ENCODE measurements at regions of chr17 and their contacts with region 1.

Region 1: DNA sequence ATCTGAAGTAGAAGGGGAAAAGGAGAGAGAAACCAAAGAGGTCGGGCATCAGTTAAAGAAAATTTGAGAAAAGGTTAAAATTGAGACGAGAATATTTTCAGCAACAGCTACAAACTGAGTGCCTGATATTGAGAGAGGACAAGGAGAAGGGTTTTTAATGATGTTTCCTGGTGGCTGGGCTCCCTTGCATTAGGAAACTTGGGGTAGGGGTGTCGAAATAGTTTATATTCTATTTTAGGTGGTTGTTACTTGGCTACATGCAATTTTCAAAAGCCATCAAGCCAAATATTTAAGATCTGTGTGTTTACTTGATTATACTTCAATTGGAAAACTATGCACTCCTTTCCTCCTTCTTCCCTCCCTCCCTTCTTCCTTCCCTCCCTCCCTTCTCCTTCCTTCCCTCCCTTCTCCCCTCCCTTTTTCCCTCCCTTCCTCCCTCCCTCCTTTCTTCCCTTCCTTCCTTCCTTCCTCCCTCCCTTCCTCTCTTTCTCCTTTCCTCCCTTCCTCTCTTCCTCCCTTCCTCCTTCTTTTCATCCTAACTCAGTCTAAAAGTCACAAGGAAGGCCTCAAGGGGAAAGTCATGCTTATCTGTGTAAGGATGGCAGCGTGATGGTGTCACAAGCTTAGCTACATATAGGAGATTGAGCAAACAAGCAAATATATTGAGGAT is 1.8 kb upstream of the APOH start:
- DNase-seq: no peak
- ATAC-seq: no peak
- H3K4me3 ChIP-seq: no peak overlapping the region
- H3K27ac ChIP-seq: no peak overlapping the region
- H3K4me1 ChIP-seq: no peaks in the 10 kb centered on the region
- H3K27me3 ChIP-seq: no peaks in the 10 kb centered on the region
- CTCF ChIP-seq: no peak

Region 2: DNA sequence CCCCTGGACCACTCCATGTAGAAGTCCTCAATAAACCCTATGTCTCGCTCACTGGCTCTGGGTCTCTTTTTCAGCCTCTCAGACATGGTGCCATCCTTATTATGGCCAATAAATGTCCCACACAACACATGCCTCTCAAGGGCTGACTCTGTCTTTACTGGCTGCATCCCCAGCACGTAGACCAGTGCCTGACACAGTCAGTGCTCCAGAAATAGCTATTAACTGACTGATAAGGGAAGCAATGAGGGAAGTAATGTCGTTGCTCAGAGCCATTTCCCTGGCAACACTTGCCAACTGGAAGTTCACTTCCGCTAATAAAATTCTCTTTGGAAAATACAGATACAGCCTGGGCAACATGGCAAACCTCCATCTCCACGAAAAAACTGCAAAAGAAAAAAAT is 17.2 kb after region 1 on chr17:
- intact Hi-C with region 1: loop called in 1 of 10 experiments (anchors 2 kb)
- DNase-seq: peak in 1 of 2 donors; percentile 8
- ATAC-seq: peak in 7 of 8 donors; percentile 33 to 96 (median 85)
- H3K4me3 ChIP-seq: no peak overlapping the region
- H3K27ac ChIP-seq: no peak overlapping the region
- H3K4me1 ChIP-seq: peaks cover 0 to 7% (median 0%) of the 10 kb centered on the region in 9 donors
- H3K27me3 ChIP-seq: no peaks in the 10 kb centered on the region
- CTCF ChIP-seq: no peak

Region 3: DNA sequence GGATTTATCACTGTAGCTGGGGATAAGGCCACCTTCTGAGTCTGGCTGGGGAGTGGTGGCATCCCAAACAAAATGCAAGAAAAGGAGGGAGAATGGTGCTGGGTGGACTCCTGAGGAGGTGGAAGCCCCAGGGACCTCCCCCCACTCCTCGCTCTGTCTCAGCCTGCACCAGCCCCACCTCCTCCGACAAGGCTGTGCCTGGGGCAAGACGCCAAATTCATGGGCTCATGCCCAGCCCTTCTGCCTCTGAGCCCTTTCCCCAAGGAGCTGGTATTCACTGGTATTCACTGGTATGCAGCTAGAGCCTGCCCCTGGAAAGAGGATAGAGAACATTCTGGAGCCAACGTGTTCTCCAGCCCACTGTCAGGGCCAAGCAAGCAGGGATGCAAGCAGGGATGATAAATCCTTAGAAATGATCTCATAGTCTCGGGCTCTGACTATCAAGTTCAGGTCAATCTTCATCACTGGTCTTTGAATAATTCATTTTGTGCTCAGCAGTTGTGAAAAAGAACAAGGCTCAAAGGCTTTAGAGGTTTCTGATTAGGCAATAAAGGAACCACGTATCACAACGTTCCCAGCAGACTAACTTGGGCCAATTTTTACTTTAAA is 661.1 kb after region 1 on chr17:
- intact Hi-C with region 1: loop called in 1 of 10 experiments (anchors 10 kb)
- DNase-seq: no peak
- ATAC-seq: no peak
- H3K4me3 ChIP-seq: no peak overlapping the region
- H3K27ac ChIP-seq: no peak overlapping the region
- H3K4me1 ChIP-seq: no peaks in the 10 kb centered on the region
- H3K27me3 ChIP-seq: peaks cover 0 to 10% (median 0%) of the 10 kb centered on the region in 7 donors
- CTCF ChIP-seq: no peak

Measured in heart right ventricle (tissue), 16 donors.